WTC11 (cell line): ENCODE measurements at regions of chr2 and their contacts with region 1.

Region 1: GRCh38 chr2:85255813-85256594 is 71.8 kb downstream of the TGOLN2 start:
- DNase-seq: peak; percentile 85
- ATAC-seq: peak; percentile 61
- H3K4me3 Mint-ChIP-seq: peak overlapping the region; percentile 68
- H3K27ac Mint-ChIP-seq: peak overlapping the region; percentile 100
- H3K4me1 Mint-ChIP-seq: peaks cover 94% of the 10 kb centered on the region
- H3K27me3 Mint-ChIP-seq: no peaks in the 10 kb centered on the region
- CTCF ChIP-seq: no peak

Region 2: GRCh38 chr2:85181134-85181631 is 74.8 kb before region 1 on chr2:
- CTCF ChIA-PET with region 1: interaction called, 21 read pairs
- POLR2A ChIA-PET with region 1: no interaction called
- DNase-seq: no peak
- ATAC-seq: no peak; the same call in 1 of the 2 replicates
- H3K4me3 Mint-ChIP-seq: no peak overlapping the region; the same call in 1 of the 2 replicates
- H3K27ac Mint-ChIP-seq: peak overlapping the region; percentile 84
- H3K4me1 Mint-ChIP-seq: peaks cover 92% of the 10 kb centered on the region
- H3K27me3 Mint-ChIP-seq: no peaks in the 10 kb centered on the region
- CTCF ChIP-seq: no peak

Region 3: DNA sequence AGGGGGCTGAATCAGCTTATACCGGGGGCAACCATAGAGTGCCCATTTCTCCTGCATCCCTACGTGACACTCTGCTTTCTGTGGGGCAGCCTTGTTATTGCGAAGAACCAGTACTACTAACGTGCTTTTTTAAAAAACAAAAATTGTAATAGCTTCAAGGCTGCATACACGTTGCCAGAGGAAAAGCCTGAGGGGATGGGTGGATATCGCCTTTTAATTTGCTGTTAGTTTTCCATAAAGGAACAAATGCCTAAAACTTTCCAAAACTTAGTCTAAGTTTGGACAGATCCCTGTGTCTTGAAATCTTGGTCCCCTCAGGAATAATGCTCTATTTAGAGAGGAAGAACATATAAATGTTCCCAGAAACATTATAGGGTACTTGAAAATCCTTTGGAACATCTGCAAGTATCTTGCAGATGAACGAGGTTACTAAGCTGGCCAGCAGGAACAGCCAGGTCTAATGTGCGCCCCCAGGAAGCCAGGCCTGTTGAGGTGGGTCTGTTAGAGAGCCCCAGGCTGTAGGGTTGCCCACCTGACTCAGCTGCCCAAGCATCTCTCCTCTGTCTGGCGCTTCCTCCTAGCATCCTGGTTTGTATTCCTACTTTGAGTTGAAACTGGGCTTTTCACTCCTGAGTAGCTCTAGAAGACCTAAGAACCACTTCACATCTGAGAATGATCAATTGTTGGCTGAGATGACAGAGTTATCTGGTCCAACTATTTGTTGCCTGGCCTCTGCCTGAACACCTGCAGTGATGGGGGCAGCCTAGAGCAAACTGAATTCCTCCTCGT is 25.1 kb before region 1 on chr2:
- CTCF ChIA-PET with region 1: interaction called, 35 read pairs
- POLR2A ChIA-PET with region 1: interaction called, 34 read pairs
- DNase-seq: peak; percentile 44
- ATAC-seq: peak; percentile 50
- H3K4me3 Mint-ChIP-seq: peak overlapping the region; percentile 18; the same call in 1 of the 2 replicates
- H3K27ac Mint-ChIP-seq: peak overlapping the region; percentile 84
- H3K4me1 Mint-ChIP-seq: peaks cover 80% of the 10 kb centered on the region
- H3K27me3 Mint-ChIP-seq: no peaks in the 10 kb centered on the region
- CTCF ChIP-seq: no peak

Region 4: GRCh38 chr2:85237865-85238521 is 18.0 kb before region 1 on chr2:
- CTCF ChIA-PET with region 1: interaction called, 41 read pairs
- POLR2A ChIA-PET with region 1: interaction called, 34 read pairs
- DNase-seq: peak; percentile 86
- ATAC-seq: peak; percentile 84
- H3K4me3 Mint-ChIP-seq: peak overlapping the region; percentile 54
- H3K27ac Mint-ChIP-seq: peak overlapping the region; percentile 98
- H3K4me1 Mint-ChIP-seq: peaks cover 81% of the 10 kb centered on the region
- H3K27me3 Mint-ChIP-seq: no peaks in the 10 kb centered on the region
- CTCF ChIP-seq: no peak

Region 5: GRCh38 chr2:85243101-85244072 is 12.6 kb before region 1 on chr2:
- CTCF ChIA-PET with region 1: interaction called, 41 read pairs
- POLR2A ChIA-PET with region 1: interaction called, 34 read pairs
- DNase-seq: peak; percentile 77
- ATAC-seq: peak; percentile 56
- H3K4me3 Mint-ChIP-seq: no peak overlapping the region
- H3K27ac Mint-ChIP-seq: peak overlapping the region; percentile 67
- H3K4me1 Mint-ChIP-seq: peaks cover 87% of the 10 kb centered on the region
- H3K27me3 Mint-ChIP-seq: no peaks in the 10 kb centered on the region
- CTCF ChIP-seq: peak; percentile 53; the same call in 1 of the 2 replicates

Region 6: GRCh38 chr2:85266146-85267041 is 10.4 kb after region 1 on chr2:
- CTCF ChIA-PET with region 1: interaction called, 45 read pairs
- POLR2A ChIA-PET with region 1: interaction called, 5 read pairs
- DNase-seq: peak; percentile 85
- ATAC-seq: peak; percentile 63
- H3K4me3 Mint-ChIP-seq: no peak overlapping the region
- H3K27ac Mint-ChIP-seq: peak overlapping the region; percentile 67
- H3K4me1 Mint-ChIP-seq: peaks cover 72% of the 10 kb centered on the region
- H3K27me3 Mint-ChIP-seq: no peaks in the 10 kb centered on the region
- CTCF ChIP-seq: peak; percentile 95

Region 7: DNA sequence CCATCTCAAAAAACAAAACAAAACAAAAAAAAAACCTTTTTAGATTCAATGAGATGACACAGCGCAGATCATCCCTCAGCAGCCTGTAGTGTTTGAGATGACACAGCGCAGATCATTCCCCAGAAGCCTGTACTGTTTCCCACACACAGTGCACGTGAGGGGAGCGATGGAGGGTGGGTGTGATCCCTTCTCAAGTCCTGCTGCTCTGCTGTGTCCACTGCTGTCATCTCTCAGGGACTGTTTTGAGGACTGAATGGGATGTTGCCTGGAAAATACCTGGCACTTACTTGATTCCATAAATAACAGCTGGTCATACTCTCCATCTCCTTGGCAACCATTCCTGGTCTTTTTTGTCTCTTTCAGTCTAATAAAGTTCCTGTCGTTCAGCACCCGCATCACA is 46.1 kb after region 1 on chr2:
- CTCF ChIA-PET with region 1: interaction called, 13 read pairs
- POLR2A ChIA-PET with region 1: interaction called, 4 read pairs
- DNase-seq: no peak
- ATAC-seq: no peak
- H3K4me3 Mint-ChIP-seq: no peak overlapping the region
- H3K27ac Mint-ChIP-seq: no peak overlapping the region
- H3K4me1 Mint-ChIP-seq: peaks cover 11% of the 10 kb centered on the region
- H3K27me3 Mint-ChIP-seq: no peaks in the 10 kb centered on the region
- CTCF ChIP-seq: no peak